AG04449 (cell line): ENCODE measurements at regions of chr19 and their contacts with region 1.

Region 1: GRCh38 chr19:19488875-19489690 is 26.3 kb downstream of the TSSK6 start:
- DNase-seq: peak; percentile 75
- H3K4me3 ChIP-seq: no peak overlapping the region
- CTCF ChIP-seq: no peak

Region 2: DNA sequence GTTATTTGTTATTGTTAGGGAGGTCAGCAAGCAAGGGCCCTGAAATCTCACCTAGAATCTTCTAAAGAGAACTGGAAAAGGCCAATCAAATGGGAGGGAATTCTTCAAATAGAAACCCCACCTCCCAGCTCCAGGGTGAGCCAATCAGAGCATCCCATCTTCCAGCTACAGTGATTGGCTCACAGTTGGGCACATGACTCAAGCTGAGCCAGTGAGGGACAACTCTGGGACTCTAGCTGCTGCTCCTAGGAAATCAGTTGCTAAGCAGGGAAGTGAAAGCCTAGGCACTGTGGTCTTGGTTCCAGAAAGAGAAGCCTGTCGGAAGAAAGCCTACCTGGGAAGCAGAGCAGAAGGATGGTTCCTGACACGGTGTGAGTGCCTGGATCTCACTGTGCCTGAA is 229.3 kb before region 1 on chr19:
- CTCF ChIA-PET with region 1: no interaction called
- POLR2A ChIA-PET with region 1: no interaction called
- DNase-seq: no peak
- H3K4me3 ChIP-seq: no peak overlapping the region
- CTCF ChIP-seq: no peak

Region 3: DNA sequence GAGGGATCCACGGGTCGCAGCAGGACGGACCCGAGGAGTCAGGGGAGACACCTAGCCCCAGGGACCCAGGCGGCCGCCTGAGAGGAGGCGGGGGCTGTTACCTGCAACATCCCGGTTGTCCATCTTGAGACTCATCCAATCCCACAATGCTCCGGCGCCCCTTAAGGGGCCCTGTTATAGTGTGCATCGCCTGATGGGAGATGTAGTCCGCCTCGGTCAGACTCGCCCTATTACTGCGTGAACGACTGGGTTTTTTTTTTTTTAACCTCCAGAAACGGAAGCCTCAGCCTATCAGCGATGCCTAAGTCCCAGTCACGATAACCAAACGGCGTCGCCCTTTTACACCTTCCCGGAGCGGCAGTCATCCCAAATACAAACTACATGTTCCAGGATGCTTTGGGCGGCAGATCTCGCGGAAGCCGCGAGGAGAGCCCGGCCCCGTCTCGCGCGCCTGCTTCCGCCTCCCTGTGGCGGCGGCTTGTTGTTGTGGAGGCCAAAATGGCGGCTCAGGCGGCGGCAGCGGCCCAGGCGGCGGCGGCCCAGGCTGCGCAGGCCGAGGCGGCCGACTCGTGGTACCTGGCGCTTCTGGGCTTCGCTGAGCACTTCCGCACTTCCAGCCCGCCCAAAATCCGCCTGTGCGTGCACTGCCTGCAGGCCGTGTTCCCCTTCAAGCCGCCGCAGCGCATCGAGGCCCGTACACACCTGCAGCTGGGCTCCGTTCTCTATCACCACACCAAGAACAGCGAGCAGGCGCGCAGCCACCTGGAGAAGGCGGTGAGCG is 168.5 kb before region 1 on chr19 and contains the starts of genes MAU2 and SUGP1:
- CTCF ChIA-PET with region 1: interaction called, 10 read pairs
- POLR2A ChIA-PET with region 1: no interaction called
- DNase-seq: peak; percentile 41
- H3K4me3 ChIP-seq: peak within 1 kb of the TSS; percentile 99
- CTCF ChIP-seq: peak; percentile 60

Region 4: DNA sequence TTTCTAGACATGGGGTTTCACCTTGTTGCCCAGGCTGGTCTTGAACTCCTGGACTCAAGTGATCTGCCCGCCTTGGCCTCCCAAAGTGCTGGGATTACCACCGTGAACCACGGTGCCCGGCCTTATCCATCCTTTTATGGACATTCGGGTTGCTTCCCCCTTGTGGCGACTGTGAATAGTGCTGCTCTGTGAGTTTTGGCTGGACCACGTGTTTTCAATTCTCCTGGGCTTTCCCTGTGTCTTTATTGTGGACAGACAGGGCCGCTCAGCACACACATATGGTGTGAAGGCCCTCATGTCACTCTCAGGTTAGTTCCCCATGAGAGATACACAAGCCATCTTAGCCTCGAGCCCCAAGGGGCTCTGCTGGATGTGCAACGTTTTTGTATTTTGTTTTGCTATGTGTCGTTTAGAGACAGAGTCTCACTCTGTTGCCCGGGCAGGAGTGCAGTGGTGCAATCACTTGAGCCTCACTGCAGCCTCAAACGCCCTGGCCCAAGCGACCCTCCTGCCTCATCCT is 127.9 kb before region 1 on chr19:
- CTCF ChIA-PET with region 1: interaction called, 392 read pairs
- POLR2A ChIA-PET with region 1: interaction called, 6 read pairs
- DNase-seq: peak; percentile 40
- H3K4me3 ChIP-seq: no peak overlapping the region
- CTCF ChIP-seq: peak; percentile 75

Region 5: DNA sequence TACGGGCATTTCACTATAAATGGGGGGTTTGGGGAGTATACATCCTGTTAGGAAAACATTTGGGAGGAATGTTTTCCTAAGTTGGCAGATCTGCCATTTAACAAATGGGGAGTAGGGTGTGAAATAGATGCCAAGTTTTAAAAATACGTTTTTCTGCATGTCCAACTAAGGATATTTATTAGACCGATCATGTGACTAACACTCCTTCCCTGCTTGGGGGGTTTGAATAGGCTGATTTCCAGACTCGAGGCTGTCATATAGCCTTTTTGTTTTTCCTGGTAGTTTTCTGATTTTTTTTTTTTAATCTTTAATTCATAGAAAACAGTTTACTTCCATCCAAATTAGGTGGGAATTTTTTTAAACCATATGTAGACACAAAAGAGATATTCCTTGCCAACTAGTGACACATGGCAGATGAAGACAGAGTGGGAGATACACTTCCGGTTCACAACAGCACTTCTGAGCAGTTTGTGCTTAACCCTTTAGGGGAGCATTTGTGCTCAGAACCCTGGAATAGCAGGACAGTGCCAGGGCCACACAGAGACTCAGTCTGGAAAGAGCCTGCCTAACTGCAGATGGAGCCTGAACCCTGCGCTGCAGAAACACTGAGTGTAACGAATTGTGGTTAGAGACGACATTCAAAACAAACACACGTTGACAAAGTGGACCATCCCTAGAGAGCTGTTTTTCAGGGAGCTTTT is 89.2 kb before region 1 on chr19:
- CTCF ChIA-PET with region 1: interaction called, 41 read pairs
- POLR2A ChIA-PET with region 1: interaction called, 3 read pairs
- DNase-seq: no peak
- H3K4me3 ChIP-seq: no peak overlapping the region
- CTCF ChIP-seq: no peak

Region 6: DNA sequence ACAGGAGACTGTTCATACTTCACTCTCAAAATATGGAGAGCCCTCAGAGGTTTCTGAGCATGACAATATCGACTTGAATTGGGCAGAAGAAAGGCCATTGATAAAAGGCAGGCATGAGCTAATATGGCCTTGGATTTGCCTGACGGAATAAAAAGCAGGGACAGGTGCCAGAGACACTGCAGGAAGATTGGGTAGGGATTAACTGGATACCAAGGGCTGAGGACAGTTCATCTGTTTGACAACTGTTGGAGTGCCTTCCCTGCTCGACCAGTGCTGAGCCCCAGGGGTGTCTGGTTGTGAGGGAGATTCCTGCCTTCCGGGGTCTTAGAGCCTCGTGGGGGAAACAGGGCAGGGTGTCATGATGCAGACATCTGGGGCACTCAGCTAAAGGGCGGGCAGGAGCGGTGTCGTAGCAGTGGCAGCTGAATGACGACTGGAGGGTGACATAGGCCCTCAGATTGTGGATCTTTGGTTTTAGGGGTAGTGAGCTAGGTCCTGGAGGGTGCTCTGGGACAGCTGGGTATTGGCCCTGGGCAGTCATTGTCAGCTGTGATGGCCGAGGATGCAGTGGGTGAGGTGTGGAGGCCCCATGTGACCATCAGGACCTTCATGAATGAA is 71.3 kb before region 1 on chr19:
- CTCF ChIA-PET with region 1: no interaction called
- POLR2A ChIA-PET with region 1: no interaction called
- DNase-seq: no peak
- H3K4me3 ChIP-seq: no peak overlapping the region
- CTCF ChIP-seq: no peak

Region 7: DNA sequence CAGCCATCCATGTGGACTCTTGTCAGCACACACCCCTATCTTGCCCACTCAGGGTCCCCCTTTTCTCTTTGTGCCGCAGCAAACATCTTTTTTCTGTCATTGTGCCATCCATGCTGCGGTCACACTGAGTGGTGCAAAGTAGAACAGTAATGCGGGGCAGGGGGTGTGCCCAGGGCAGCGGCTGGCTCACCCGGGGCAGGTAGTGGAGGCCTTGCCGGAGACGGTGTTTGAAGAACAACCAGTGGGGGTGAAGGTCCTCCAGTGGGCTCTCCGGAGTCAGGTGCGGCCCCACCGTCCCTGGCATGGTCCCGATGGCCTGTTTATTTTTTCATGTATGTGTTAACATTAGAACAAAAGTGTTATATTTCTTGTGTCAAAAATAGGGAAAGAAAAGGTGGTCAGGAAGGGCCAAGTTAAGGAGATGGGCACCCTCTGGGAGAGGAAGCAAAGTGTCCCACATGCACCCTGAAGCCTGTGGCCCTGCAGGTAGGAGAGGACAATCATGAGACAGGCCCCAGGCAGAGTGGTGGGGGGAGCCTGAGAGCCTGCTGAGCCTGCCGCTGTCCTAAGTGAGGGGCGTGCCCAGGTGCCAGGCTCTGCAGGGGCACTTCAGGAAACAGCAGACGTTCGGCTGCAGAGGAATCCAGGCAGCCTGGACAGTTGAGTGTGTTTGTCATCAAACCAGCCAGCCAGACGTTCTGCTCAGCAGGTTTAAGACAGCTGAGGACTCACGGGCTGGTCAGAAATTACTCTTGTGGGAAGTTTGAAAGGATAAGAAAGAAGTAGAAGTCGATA is 13.9 kb after region 1 on chr19:
- CTCF ChIA-PET with region 1: interaction called, 18 read pairs
- POLR2A ChIA-PET with region 1: no interaction called
- DNase-seq: no peak
- H3K4me3 ChIP-seq: no peak overlapping the region
- CTCF ChIP-seq: no peak